ENCODE measurements at regions of chr4 and their contacts with region 1.

Region 1: GRCh38 chr4:113905301-113905700 is 74.1 kb downstream of the ARSJ start:
- DNase-seq: no peak
- H3K4me3 ChIP-seq: no peak overlapping the region
- H3K27ac ChIP-seq: no peak overlapping the region
- H3K27me3 ChIP-seq: no peaks in the 10 kb centered on the region
- CTCF ChIP-seq: no peak

Region 2: GRCh38 chr4:113468165-113469022 is 436.9 kb before region 1 on chr4:
- CTCF ChIA-PET with region 1: no interaction called
- POLR2A ChIA-PET with region 1: interaction called, 14 read pairs
- DNase-seq: peak; percentile 99
- H3K4me3 ChIP-seq: peak overlapping the region; percentile 2
- H3K27ac ChIP-seq: peak overlapping the region; percentile 86
- H3K27me3 ChIP-seq: no peaks in the 10 kb centered on the region
- CTCF ChIP-seq: no peak